Head of caudate nucleus (tissue), 42 donors: ENCODE measurements at regions of chr10 and their contacts with region 1.

Region 1: DNA sequence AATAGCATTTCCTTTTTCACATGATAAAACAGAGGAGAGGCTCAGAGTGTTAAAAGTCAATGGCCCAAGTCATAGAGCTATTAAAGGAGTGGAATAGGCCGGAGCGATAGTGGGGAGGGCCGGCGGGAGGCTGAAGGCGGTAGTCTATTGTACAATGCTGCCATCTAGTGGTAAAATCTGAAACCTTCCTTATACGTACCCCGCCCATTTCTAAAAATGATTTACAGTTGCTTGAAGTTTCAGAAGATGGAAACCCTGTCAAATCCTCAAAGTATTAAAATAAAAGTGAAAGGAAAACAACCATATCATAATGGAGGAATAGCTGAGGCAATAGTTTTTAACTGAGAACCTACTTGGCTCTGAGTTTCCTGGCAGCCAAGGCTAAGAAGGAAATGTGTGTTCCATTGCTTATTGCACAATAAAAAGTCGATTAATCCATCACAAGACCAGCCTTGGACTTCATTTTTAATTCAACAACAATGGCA is 209.1 kb downstream of the CCSER2 start:
- DNase-seq: peak in 34 of 42 donors; percentile 26 to 82 (median 55)

Region 2: GRCh38 chr10:84264611-84265141 is 272.8 kb before region 1 on chr10:
- intact Hi-C with region 1: loop called (anchors 5 kb)
- DNase-seq: peak; percentile 62 to 93 (median 84)

Region 3: DNA sequence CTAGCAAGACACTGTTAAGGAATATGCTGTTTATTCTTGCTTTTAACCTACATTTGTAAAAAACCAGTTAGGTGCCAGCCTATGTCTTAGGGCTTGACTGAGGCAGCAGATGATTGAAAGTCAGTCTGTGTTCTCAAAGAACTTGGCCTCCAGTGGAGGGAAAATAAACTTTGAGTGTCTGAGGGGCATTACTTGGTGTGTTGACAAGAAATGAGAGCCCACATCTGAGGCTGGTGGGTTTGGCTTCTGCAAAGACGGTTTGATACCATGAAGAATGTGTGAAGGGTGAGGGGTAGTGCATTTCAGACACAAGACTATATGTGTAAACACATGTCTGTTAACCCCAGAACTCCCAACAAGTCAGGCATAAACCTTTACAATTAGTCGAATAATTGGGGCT is 180.6 kb before region 1 on chr10:
- intact Hi-C with region 1: loop called (anchors 5 kb)
- DNase-seq: no peak

Region 4: GRCh38 chr10:84374455-84374854 is 163.0 kb before region 1 on chr10:
- intact Hi-C with region 1: loop called (anchors 5 kb)
- DNase-seq: no peak

Region 5: DNA sequence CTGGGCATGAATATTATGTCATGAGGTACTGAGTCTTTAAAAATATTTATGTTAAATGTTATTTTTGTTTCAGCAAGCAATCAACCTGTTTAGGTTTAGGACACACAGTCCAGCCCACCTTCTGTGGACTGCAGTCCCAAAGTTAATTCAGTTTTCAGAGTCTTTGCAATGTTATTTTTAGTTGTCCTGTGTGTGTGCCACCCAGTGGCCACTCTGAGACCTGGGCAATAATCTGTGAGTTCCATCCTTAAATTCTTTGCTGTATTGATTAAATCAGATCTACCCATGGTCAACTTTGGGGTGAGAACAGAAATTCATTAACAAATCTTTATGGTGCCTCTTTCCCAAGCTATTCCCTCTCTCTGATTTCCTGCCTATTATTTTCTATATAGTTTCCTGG is 206.0 kb after region 1 on chr10:
- intact Hi-C with region 1: no loop called
- DNase-seq: no peak